HCT116 (cell line): ENCODE measurements at regions of chr10 and their contacts with region 1.

Region 1: GRCh38 chr10:99711129-99711719 is 20.7 kb downstream of the COX15 start:
- DNase-seq: peak; percentile 54
- ATAC-seq: peak; percentile 94
- H3K4me3 ChIP-seq: no peak overlapping the region
- H3K27ac ChIP-seq: no peak overlapping the region
- H3K4me1 ChIP-seq: no peaks in the 10 kb centered on the region
- H3K27me3 ChIP-seq: no peaks in the 10 kb centered on the region
- CTCF ChIP-seq: peak; percentile 72 to 84 (median 79)
- POLR2A ChIP-seq: no peak
- RAD21 ChIP-seq: peak; percentile 88

Region 2: GRCh38 chr10:99395750-99396445 is 315.3 kb before region 1 on chr10:
- CTCF ChIA-PET with region 1: no interaction called
- POLR2A ChIA-PET with region 1: no interaction called
- RAD21 ChIA-PET with region 1: no interaction called
- intact Hi-C with region 1: loop called (anchors 5 kb)
- DNase-seq: no peak
- ATAC-seq: peak; percentile 41; the same call in 1 of the 2 replicates
- H3K4me3 ChIP-seq: no peak overlapping the region
- H3K27ac ChIP-seq: peak overlapping the region; percentile 26; the same call in 1 of the 2 replicates
- H3K4me1 ChIP-seq: peaks cover 15 to 31% of the 10 kb centered on the region in 2 experiments; a peak in 3 of 4 replicates
- H3K27me3 ChIP-seq: no peaks in the 10 kb centered on the region
- CTCF ChIP-seq: no peak
- POLR2A ChIP-seq: no peak
- RAD21 ChIP-seq: no peak

Region 3: GRCh38 chr10:99484603-99485581 is 226.3 kb before region 1 on chr10:
- CTCF ChIA-PET with region 1: interaction called, 3 read pairs
- POLR2A ChIA-PET with region 1: no interaction called
- RAD21 ChIA-PET with region 1: no interaction called
- intact Hi-C with region 1: loop called (anchors 5 kb)
- DNase-seq: no peak
- ATAC-seq: peak; percentile 90
- H3K4me3 ChIP-seq: no peak overlapping the region
- H3K27ac ChIP-seq: no peak overlapping the region
- H3K4me1 ChIP-seq: peaks cover 0 to 8% of the 10 kb centered on the region in 2 experiments; a peak in 1 of 4 replicates
- H3K27me3 ChIP-seq: peaks cover 27% of the 10 kb centered on the region
- CTCF ChIP-seq: peak; percentile 79 to 87 (median 84)
- POLR2A ChIP-seq: no peak
- RAD21 ChIP-seq: peak; percentile 79

Region 4: GRCh38 chr10:99560277-99561126 is 150.7 kb before region 1 on chr10:
- CTCF ChIA-PET with region 1: interaction called, 3 read pairs
- POLR2A ChIA-PET with region 1: no interaction called
- RAD21 ChIA-PET with region 1: no interaction called
- intact Hi-C with region 1: loop called (anchors 1 kb)
- DNase-seq: peak; percentile 61
- ATAC-seq: peak; percentile 94
- H3K4me3 ChIP-seq: no peak overlapping the region
- H3K27ac ChIP-seq: no peak overlapping the region
- H3K4me1 ChIP-seq: peaks cover 0 to 4% of the 10 kb centered on the region in 2 experiments; a peak in 1 of 4 replicates
- H3K27me3 ChIP-seq: no peaks in the 10 kb centered on the region; the same call in 1 of the 2 replicates
- CTCF ChIP-seq: peak; percentile 81 to 99 (median 92)
- POLR2A ChIP-seq: no peak
- RAD21 ChIP-seq: peak; percentile 94

Region 5: DNA sequence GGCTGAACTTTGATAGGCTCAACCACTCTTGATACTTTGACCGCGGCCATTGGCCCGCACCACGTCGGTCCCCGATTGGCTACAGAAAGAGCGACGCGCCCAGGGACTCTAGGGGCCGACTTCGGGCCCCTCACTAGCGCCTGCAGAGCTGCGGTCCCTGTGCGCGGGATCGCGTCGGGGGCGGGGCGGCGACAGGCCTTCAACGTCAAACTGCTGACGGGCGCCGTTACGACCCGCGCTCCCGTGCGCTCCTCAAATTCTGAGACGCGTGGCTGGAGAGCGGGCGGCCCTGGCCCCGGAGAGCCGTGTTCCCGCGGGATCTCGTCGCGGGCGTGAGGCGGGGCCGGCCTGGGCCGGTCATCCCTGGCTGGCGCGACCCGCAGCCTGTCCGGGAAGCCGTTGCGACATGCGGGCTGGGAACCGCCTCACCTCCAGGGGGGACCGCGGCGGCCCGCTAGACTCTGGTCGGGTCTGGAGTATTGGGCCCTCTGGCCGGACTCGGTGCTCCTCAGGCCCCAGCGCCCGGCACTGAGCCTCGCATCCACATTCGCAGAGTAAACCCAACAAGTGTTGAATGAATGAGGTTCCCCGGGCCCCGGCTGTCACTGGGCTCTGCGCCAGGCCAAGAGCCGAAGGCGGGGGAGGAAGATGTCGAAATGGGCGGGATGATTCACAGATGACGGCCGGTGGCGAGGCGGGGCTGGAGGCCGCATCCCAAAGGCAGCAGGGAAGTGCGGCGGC is 90.3 kb before region 1 on chr10:
- CTCF ChIA-PET with region 1: interaction called, 4 read pairs
- POLR2A ChIA-PET with region 1: no interaction called
- RAD21 ChIA-PET with region 1: no interaction called
- intact Hi-C with region 1: loop called (anchors 2 kb)
- DNase-seq: peak; percentile 89
- ATAC-seq: peak; percentile 90
- H3K4me3 ChIP-seq: peak overlapping the region; percentile 63 to 73
- H3K27ac ChIP-seq: peak overlapping the region; percentile 96
- H3K4me1 ChIP-seq: peaks cover 17 to 34% of the 10 kb centered on the region in 2 experiments
- H3K27me3 ChIP-seq: no peaks in the 10 kb centered on the region
- CTCF ChIP-seq: peak in 1 of 3 experiments; percentile 7; a peak in 1 of 6 replicates
- POLR2A ChIP-seq: peak; percentile 56
- RAD21 ChIP-seq: no peak

Region 6: GRCh38 chr10:99630439-99630838 is 80.8 kb before region 1 on chr10:
- CTCF ChIA-PET with region 1: interaction called, 3 read pairs
- POLR2A ChIA-PET with region 1: no interaction called
- RAD21 ChIA-PET with region 1: no interaction called
- intact Hi-C with region 1: loop called (anchors 1 kb)
- DNase-seq: peak; percentile 26
- ATAC-seq: peak; percentile 88
- H3K4me3 ChIP-seq: no peak overlapping the region
- H3K27ac ChIP-seq: no peak overlapping the region
- H3K4me1 ChIP-seq: peaks cover 0 to 3% of the 10 kb centered on the region in 2 experiments; a peak in 1 of 4 replicates
- H3K27me3 ChIP-seq: no peaks in the 10 kb centered on the region
- CTCF ChIP-seq: peak; percentile 28 to 70 (median 55); a peak in 4 of 6 replicates
- POLR2A ChIP-seq: no peak
- RAD21 ChIP-seq: peak; percentile 82

Region 7: DNA sequence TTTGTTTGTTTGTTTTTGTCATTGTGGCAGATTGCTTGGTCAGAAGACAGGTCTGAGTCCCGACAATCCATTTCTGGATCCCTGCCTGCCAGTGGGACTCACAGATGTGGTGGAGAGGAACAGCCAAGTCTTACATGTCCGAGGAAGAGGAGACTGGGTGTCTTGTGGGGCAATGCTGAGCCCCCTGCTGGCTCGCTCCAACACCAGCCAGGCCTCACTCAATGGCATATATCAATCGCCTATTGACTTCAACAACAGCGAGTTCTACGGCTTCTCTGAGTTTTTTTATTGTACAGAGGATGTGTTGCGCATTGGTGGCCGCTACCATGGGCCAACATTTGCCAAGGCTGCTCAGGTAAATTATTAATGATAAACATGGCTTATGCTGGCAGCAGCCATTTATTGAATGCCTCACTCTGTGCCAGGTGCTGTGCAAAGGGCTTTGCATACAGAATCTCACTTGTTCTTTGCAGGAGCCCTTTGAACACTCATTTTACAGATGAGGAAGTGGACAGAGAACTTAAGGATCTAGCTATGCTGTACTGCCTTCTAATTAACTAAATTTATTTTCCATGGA is 12.6 kb before region 1 on chr10:
- CTCF ChIA-PET with region 1: no interaction called
- POLR2A ChIA-PET with region 1: no interaction called
- RAD21 ChIA-PET with region 1: no interaction called
- intact Hi-C with region 1: no loop called
- DNase-seq: no peak
- ATAC-seq: peak; percentile 69; the same call in 1 of the 2 replicates
- H3K4me3 ChIP-seq: no peak overlapping the region
- H3K27ac ChIP-seq: no peak overlapping the region
- H3K4me1 ChIP-seq: no peaks in the 10 kb centered on the region
- H3K27me3 ChIP-seq: no peaks in the 10 kb centered on the region
- CTCF ChIP-seq: peak; percentile 20 to 38 (median 37); a peak in 4 of 6 replicates
- POLR2A ChIP-seq: no peak
- RAD21 ChIP-seq: peak; percentile 32

Region 8: GRCh38 chr10:99754670-99755069 is 43.4 kb after region 1 on chr10:
- CTCF ChIA-PET with region 1: no interaction called
- POLR2A ChIA-PET with region 1: no interaction called
- RAD21 ChIA-PET with region 1: no interaction called
- intact Hi-C with region 1: no loop called
- DNase-seq: no peak
- ATAC-seq: no peak
- H3K4me3 ChIP-seq: no peak overlapping the region
- H3K27ac ChIP-seq: no peak overlapping the region
- H3K4me1 ChIP-seq: peaks cover 18 to 26% of the 10 kb centered on the region in 2 experiments
- H3K27me3 ChIP-seq: no peaks in the 10 kb centered on the region
- CTCF ChIP-seq: no peak
- POLR2A ChIP-seq: no peak
- RAD21 ChIP-seq: no peak

Region 9: GRCh38 chr10:99845837-99846382 is 134.7 kb after region 1 on chr10:
- CTCF ChIA-PET with region 1: no interaction called
- POLR2A ChIA-PET with region 1: no interaction called
- RAD21 ChIA-PET with region 1: no interaction called
- intact Hi-C with region 1: no loop called
- DNase-seq: peak; percentile 86
- ATAC-seq: peak; percentile 89
- H3K4me3 ChIP-seq: no peak overlapping the region
- H3K27ac ChIP-seq: 0 out of 2 replicates have a peak overlapping the region, but pooled peaks have one; percentile 2
- H3K4me1 ChIP-seq: no peaks in the 10 kb centered on the region
- H3K27me3 ChIP-seq: no peaks in the 10 kb centered on the region
- CTCF ChIP-seq: peak; percentile 95 to 100 (median 97)
- POLR2A ChIP-seq: no peak
- RAD21 ChIP-seq: peak; percentile 99